ENCODE measurements at regions of chr10 and their contacts with region 1.

Region 1: DNA sequence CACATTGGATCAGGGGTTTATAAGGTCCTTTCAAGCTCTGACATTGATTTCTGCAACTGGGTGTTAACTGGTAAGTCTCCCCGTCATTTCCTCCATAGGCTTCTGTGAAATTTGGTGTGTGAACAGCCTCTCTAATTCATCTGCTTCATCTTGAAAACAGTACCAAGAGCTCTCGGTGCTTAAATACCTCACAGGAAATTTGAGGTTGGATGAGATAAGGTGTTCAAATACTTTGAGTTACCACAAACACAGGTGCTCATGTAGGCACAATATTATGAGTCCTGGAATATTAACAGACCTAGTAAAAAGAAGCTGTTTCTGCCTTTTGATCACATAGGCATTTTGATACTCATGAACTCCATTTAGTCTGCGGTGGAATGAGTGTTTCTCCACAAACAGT is 85.2 kb downstream of the RTKN2 start:
- DNase-seq: peak; percentile 49
- H3K4me3 Mint-ChIP-seq: peak overlapping the region; percentile 9
- H3K27ac Mint-ChIP-seq: peak overlapping the region; percentile 91
- H3K4me1 Mint-ChIP-seq: peaks cover 84% of the 10 kb centered on the region
- H3K27me3 Mint-ChIP-seq: no peaks in the 10 kb centered on the region

Region 2: GRCh38 chr10:61992671-61993668 is 190.5 kb before region 1 on chr10:
- CTCF ChIA-PET with region 1: no interaction called
- POLR2A ChIA-PET with region 1: interaction called, 25 read pairs
- DNase-seq: peak; percentile 75
- H3K4me3 Mint-ChIP-seq: peak overlapping the region; percentile 69
- H3K27ac Mint-ChIP-seq: peak overlapping the region; percentile 91
- H3K4me1 Mint-ChIP-seq: peaks cover 76% of the 10 kb centered on the region
- H3K27me3 Mint-ChIP-seq: no peaks in the 10 kb centered on the region

Region 3: DNA sequence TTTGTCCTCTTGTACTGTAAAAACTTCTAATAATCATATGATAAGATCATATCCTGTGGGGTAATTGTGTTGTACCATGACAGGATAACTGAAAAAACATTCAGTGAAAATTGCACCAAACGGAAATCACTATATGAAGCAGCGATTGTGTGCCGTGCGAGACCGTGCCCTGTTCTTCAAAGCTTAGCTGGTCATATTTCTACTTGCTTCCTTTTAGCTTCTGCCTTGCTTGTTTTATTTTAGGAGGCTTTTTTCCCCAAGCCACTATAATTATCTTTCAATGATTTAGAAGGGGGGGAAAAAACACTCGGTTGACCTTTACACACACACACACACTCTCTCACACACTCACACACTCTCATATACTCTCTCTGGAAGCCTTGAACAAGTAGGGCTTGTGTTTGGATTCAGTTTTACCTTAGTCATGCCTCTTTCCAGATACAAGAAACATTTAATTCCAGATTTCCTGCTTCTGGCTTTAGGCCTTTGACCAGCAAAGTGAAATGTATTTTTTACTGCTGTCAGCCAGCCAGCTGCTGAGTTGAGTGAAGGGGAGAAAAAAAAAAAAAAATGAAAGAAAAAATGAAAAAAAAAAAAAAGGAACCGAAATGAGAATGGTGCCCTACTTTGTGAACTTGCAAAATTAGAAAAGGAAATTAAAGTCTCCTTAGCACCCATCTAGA is 100.6 kb before region 1 on chr10:
- CTCF ChIA-PET with region 1: interaction called, 4 read pairs
- POLR2A ChIA-PET with region 1: interaction called, 45 read pairs
- DNase-seq: peak; percentile 69
- H3K4me3 Mint-ChIP-seq: peak overlapping the region; percentile 61
- H3K27ac Mint-ChIP-seq: peak overlapping the region; percentile 92
- H3K4me1 Mint-ChIP-seq: peaks cover 81% of the 10 kb centered on the region
- H3K27me3 Mint-ChIP-seq: no peaks in the 10 kb centered on the region

Region 4: GRCh38 chr10:62095181-62096071 is 88.0 kb before region 1 on chr10:
- CTCF ChIA-PET with region 1: no interaction called
- POLR2A ChIA-PET with region 1: no interaction called
- DNase-seq: no peak
- H3K4me3 Mint-ChIP-seq: no peak overlapping the region
- H3K27ac Mint-ChIP-seq: peak overlapping the region; percentile 17
- H3K4me1 Mint-ChIP-seq: peaks cover 38% of the 10 kb centered on the region
- H3K27me3 Mint-ChIP-seq: no peaks in the 10 kb centered on the region

Region 5: GRCh38 chr10:62199584-62199983 is 16.1 kb after region 1 on chr10:
- CTCF ChIA-PET with region 1: no interaction called
- POLR2A ChIA-PET with region 1: interaction called, 29 read pairs
- DNase-seq: no peak
- H3K4me3 Mint-ChIP-seq: no peak overlapping the region
- H3K27ac Mint-ChIP-seq: peak overlapping the region; percentile 42
- H3K4me1 Mint-ChIP-seq: peaks cover 31% of the 10 kb centered on the region
- H3K27me3 Mint-ChIP-seq: no peaks in the 10 kb centered on the region

Region 6: DNA sequence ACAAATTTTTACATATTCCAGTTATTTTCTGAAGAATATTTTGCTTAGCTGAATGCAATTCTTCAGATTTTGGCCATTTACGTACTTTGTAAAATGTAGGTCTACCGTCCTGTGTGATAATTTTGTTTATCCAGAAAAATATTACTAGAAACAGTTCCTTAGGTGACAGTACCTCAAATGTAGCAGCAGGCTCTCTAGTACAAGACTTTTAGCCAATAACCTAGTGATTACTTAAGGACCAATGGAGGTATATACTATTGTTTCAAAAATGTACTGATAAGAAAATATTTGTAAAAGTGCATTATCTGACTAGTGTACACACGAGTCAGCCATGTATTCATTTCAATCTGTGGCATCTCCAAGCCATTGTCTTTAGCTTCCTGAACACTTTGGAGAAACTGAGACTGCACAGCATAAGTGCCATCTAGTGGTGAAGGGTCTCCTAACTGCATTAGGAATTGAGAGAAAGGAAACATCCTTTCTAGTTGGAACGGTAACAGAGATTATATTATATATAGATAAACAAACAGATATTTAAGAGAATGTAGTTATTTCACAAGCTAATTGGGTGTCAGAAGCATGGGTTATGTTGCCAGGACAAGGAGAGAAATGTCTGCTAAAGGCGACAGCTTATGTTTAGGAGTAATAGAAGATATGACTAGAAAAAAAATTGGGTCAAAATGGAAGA is 61.5 kb after region 1 on chr10:
- CTCF ChIA-PET with region 1: interaction called, 8 read pairs
- POLR2A ChIA-PET with region 1: interaction called, 73 read pairs
- DNase-seq: peak; percentile 59
- H3K4me3 Mint-ChIP-seq: peak overlapping the region; percentile 52
- H3K27ac Mint-ChIP-seq: peak overlapping the region; percentile 65
- H3K4me1 Mint-ChIP-seq: peaks cover 38% of the 10 kb centered on the region
- H3K27me3 Mint-ChIP-seq: no peaks in the 10 kb centered on the region